Activated CD4-positive, alpha-beta T cell treated with anti-CD3 and anti-CD28 coated beads for 36 hours (primary cell): ENCODE measurements at regions of chr14 and their contacts with region 1.

Region 1: GRCh38 chr14:54347997-54348611 is 48.7 kb upstream of the CDKN3 start:
- DNase-seq: no peak
- ATAC-seq: no peak
- H3K4me3 Mint-ChIP-seq: no peak overlapping the region
- H3K27ac Mint-ChIP-seq: no peak overlapping the region
- H3K4me1 Mint-ChIP-seq: peaks cover 6% of the 10 kb centered on the region
- H3K27me3 Mint-ChIP-seq: peaks cover 13% of the 10 kb centered on the region

Region 2: GRCh38 chr14:53295985-53296582 is 1052.0 kb before region 1 on chr14:
- CTCF ChIA-PET with region 1: interaction called, 8 read pairs
- POLR2A ChIA-PET with region 1: no interaction called
- intact Hi-C with region 1: loop called in 1 of 2 experiments (anchors 5 kb)
- DNase-seq: peak; percentile 27
- ATAC-seq: peak; percentile 33
- H3K4me3 Mint-ChIP-seq: no peak overlapping the region
- H3K27ac Mint-ChIP-seq: no peak overlapping the region
- H3K4me1 Mint-ChIP-seq: no peaks in the 10 kb centered on the region
- H3K27me3 Mint-ChIP-seq: no peaks in the 10 kb centered on the region

Region 3: DNA sequence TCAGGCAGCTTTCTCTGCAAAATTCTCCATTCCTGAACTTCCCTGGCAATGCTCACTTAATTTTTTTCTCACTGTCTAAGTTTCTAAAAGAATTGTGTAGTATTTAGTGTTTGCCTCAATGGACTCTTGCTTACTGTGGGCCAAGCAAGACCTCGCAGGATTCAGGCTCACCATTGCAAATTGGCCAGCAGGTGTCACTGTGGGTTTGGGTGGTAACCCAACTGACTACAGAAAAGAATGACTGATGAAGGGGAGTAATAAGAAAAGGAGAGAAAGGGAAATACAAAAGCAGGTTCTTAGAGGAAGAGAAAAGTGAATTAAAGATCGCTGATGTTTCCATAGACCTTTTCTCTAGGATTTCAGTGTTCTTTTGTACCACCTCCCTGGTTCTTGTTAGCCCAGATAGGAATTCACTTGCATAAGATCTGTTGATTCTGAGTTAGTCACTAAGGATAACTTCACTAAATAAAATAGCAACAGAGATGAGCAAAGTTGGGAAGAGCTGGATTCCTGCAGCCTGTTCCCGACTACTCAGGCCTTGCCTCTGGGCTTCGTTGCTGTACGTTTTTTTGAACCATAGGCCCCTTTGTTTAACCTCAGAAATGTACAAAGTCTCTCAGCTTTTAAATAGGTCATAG is 808.5 kb before region 1 on chr14:
- CTCF ChIA-PET with region 1: interaction called, 16 read pairs
- POLR2A ChIA-PET with region 1: no interaction called
- intact Hi-C with region 1: loop called (anchors 1 to 5 kb)
- DNase-seq: peak; percentile 78
- ATAC-seq: no peak
- H3K4me3 Mint-ChIP-seq: no peak overlapping the region
- H3K27ac Mint-ChIP-seq: no peak overlapping the region
- H3K4me1 Mint-ChIP-seq: no peaks in the 10 kb centered on the region
- H3K27me3 Mint-ChIP-seq: peaks cover 2% of the 10 kb centered on the region

Region 4: DNA sequence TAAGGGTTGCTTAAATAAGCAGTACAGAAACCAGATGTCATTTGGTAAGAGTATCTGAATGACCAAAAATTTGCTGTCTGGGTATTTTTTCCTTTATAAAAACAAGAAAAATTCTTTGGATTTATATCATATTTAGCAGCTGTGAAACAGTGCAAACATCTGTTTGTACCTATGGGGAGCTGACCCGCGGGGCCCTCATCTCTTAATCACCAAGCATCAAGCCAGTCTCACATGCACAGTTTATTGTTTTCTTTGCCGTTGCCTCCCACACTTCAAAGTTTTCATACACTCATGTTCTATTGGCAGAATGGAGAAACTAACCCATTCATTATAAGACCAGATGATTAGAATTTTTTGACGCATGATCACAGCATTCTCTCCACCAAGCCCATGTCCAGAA is 533.7 kb before region 1 on chr14:
- CTCF ChIA-PET with region 1: no interaction called
- POLR2A ChIA-PET with region 1: no interaction called
- intact Hi-C with region 1: no loop called
- DNase-seq: no peak
- ATAC-seq: no peak
- H3K4me3 Mint-ChIP-seq: no peak overlapping the region
- H3K27ac Mint-ChIP-seq: no peak overlapping the region
- H3K4me1 Mint-ChIP-seq: no peaks in the 10 kb centered on the region
- H3K27me3 Mint-ChIP-seq: no peaks in the 10 kb centered on the region

Region 5: DNA sequence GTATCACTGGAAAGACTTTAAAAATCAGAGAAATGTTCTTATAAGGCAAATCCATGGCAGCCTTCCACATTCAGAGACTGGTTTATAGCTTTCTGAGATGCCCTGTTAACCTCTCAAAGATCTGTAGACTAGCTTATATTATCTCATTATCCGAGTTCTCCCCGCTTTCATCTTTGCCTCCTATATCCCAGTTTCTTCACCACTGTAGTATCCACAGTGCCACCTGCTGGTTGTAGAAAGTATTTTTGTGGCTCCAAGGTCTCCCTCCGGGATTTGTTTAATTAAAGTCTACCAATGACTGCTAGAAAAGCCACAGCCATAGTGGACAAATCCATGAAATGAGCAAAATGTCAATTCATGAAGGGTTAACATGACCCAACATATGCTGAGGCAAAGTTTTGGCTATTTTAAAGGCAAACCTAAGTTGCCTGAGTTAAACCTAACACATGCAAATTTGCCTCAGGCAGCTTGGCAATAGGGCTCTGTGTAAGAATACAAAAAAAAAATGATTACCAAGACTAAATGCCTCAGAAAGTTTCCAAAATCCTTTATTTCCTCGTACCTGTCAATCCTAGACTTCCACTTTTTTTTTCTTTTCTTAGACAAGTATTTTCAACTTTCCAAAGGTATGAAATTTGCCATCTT is 172.7 kb before region 1 on chr14:
- CTCF ChIA-PET with region 1: interaction called, 8 read pairs
- POLR2A ChIA-PET with region 1: no interaction called
- intact Hi-C with region 1: loop called (anchors 5 kb)
- DNase-seq: peak; percentile 72
- ATAC-seq: no peak
- H3K4me3 Mint-ChIP-seq: no peak overlapping the region
- H3K27ac Mint-ChIP-seq: no peak overlapping the region
- H3K4me1 Mint-ChIP-seq: no peaks in the 10 kb centered on the region
- H3K27me3 Mint-ChIP-seq: peaks cover 24% of the 10 kb centered on the region

Region 6: DNA sequence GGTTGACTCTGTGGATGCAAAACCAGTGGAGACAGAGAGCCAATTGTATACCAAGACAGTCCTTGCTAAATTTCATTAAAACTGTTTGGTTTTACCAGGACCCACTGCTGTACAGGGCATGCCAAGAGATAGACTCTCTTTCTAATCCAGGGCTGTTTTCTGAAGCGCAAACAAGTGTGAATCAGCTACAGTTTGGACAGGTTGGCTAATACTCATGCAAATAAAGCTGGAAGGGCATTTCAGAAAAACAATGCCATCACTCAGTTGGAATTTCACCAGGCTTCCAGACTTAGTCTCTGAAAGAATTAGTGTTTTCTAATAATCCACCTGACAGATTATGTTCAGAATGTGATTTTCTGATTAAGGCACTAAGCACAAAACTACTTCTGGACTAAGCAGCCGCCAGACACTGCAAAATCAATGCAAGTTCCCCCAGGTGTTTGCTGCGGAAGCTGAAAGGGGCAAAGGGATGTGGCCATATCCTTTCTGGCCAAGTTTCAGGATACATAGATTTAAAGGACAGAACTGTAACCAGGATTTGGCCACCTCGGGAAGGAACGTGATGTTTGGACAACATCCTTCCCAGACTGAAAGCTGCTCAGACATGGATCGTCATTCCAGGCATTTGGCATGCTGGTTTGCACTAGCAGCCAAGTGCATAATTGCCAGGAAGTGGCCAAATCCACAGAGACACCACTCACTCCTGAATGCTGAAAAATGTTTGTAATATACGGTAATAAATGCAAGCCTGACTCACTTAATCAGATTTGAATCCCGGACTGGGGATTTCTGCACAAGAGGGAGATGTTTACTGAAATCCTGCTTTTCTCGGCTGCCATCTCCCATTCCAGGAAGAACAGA is 16.7 kb after region 1 on chr14:
- CTCF ChIA-PET with region 1: interaction called, 12 read pairs
- POLR2A ChIA-PET with region 1: no interaction called
- intact Hi-C with region 1: no loop called
- DNase-seq: no peak
- ATAC-seq: no peak
- H3K4me3 Mint-ChIP-seq: no peak overlapping the region
- H3K27ac Mint-ChIP-seq: no peak overlapping the region
- H3K4me1 Mint-ChIP-seq: no peaks in the 10 kb centered on the region
- H3K27me3 Mint-ChIP-seq: peaks cover 12% of the 10 kb centered on the region